Heart left ventricle (tissue), 16 donors: ENCODE measurements at regions of chr9 and their contacts with region 1.

Region 1: GRCh38 chr9:107489687-107490605 is at the start of gene KLF4:
- DNase-seq: peak; percentile 92 to 94 (median 93)
- ATAC-seq: peak; percentile 71 to 91 (median 83)
- H3K4me3 ChIP-seq: peak within 1 kb of the TSS; percentile 64 to 92 (median 81)
- H3K27ac ChIP-seq: peak within 1 kb of the TSS; percentile 90 to 99 (median 95)
- H3K4me1 ChIP-seq: peaks cover 0 to 47% (median 15%) of the 10 kb centered on the region in 12 donors
- H3K27me3 ChIP-seq: peaks cover 0 to 16% (median 0%) of the 10 kb centered on the region in 9 donors
- CTCF ChIP-seq: peak in 1 of 12 donors; percentile 3
- POLR2A ChIP-seq: peak in 1 of 2 donors; percentile 92
- total RNA-seq, gene KLF4: 17.1 to 63.3 (median 21.3) TPM

Region 2: DNA sequence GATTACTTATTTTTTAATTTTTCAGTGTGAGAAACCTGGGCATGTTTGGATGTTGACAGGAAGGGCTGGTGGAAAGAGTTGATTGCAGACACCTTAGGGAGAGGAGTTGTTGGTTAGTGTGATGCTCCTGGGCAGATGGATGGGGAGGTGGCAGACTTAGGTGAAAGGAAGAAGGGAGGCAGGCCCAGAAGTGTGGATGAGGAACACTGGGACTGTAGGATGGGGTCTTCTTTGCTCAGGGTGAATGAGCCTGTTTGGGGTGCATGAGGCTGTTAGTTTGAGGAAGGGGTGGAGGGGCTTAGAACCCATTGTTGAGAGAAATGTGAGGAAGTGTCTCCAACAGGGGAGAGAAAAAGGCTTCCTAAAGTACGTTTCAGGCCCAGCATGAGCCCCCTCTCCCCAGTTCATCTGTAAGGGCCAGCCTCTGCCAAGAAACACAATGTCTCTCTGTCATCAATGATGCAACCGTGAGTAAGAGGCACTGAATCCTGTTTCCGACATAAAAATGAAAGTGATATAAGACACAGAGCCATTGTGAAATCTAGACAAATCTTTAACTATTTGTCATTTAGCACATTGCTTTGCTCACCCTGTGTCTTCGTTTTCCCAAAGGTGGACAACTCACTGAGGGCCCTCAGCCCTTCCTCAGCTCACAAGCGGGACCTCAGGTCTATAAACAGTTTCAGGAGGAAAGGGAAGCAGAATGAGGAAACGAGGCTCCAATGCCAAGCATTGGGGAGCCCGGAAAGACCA is 58.3 kb after region 1 on chr9:
- intact Hi-C with region 1: loop called in 1 of 10 experiments (anchors 5 kb)
- DNase-seq: peak in 3 of 5 donors; percentile 33 to 41 (median 33)
- ATAC-seq: peak; percentile 66 to 95 (median 91)
- H3K4me3 ChIP-seq: peak overlapping the region in 9 of 12 donors; percentile 1 to 40 (median 21)
- H3K27ac ChIP-seq: peak overlapping the region; percentile 42 to 89 (median 68)
- H3K4me1 ChIP-seq: peaks cover 0 to 23% (median 9%) of the 10 kb centered on the region in 12 donors
- H3K27me3 ChIP-seq: no peaks in the 10 kb centered on the region
- CTCF ChIP-seq: no peak
- POLR2A ChIP-seq: no peak

Region 3: GRCh38 chr9:107600060-107600573 is 110.2 kb after region 1 on chr9:
- intact Hi-C with region 1: loop called in 2 of 10 experiments (anchors 5 to 10 kb)
- DNase-seq: peak in 3 of 5 donors; percentile 21 to 57 (median 27)
- ATAC-seq: peak; percentile 83 to 96 (median 88)
- H3K4me3 ChIP-seq: no peak overlapping the region
- H3K27ac ChIP-seq: peak overlapping the region; percentile 35 to 71 (median 65)
- H3K4me1 ChIP-seq: peaks cover 0 to 20% (median 11%) of the 10 kb centered on the region in 12 donors
- H3K27me3 ChIP-seq: no peaks in the 10 kb centered on the region
- CTCF ChIP-seq: no peak
- POLR2A ChIP-seq: no peak

Region 4: GRCh38 chr9:107760454-107761237 is 270.7 kb after region 1 on chr9:
- intact Hi-C with region 1: loop called in 3 of 10 experiments (anchors 10 kb)
- DNase-seq: peak; percentile 53 to 77 (median 66)
- ATAC-seq: peak; percentile 88 to 93 (median 90)
- H3K4me3 ChIP-seq: no peak overlapping the region
- H3K27ac ChIP-seq: peak overlapping the region in 10 of 12 donors; percentile 7 to 85 (median 42)
- H3K4me1 ChIP-seq: peaks cover 0 to 46% (median 6%) of the 10 kb centered on the region in 12 donors
- H3K27me3 ChIP-seq: no peaks in the 10 kb centered on the region
- CTCF ChIP-seq: no peak
- POLR2A ChIP-seq: no peak

Region 5: GRCh38 chr9:108142504-108143201 is 652.7 kb after region 1 on chr9:
- intact Hi-C with region 1: loop called in 6 of 10 experiments (anchors 2 to 10 kb)
- DNase-seq: peak; percentile 76 to 85 (median 80)
- ATAC-seq: peak; percentile 98 to 99 (median 98)
- H3K4me3 ChIP-seq: no peak overlapping the region
- H3K27ac ChIP-seq: peak overlapping the region; percentile 53 to 91 (median 80)
- H3K4me1 ChIP-seq: peaks cover 0 to 25% (median 16%) of the 10 kb centered on the region in 12 donors
- H3K27me3 ChIP-seq: no peaks in the 10 kb centered on the region
- CTCF ChIP-seq: no peak
- POLR2A ChIP-seq: peak in 1 of 2 donors; percentile 5

Region 6: GRCh38 chr9:108761655-108762347 is 1271.9 kb after region 1 on chr9:
- intact Hi-C with region 1: loop called in 2 of 10 experiments (anchors 5 kb)
- DNase-seq: peak in 4 of 5 donors; percentile 33 to 60 (median 50)
- ATAC-seq: peak; percentile 37 to 80 (median 78)
- H3K4me3 ChIP-seq: no peak overlapping the region
- H3K27ac ChIP-seq: no peak overlapping the region
- H3K4me1 ChIP-seq: peaks cover 0 to 9% (median 0%) of the 10 kb centered on the region in 12 donors
- H3K27me3 ChIP-seq: no peaks in the 10 kb centered on the region
- CTCF ChIP-seq: peak; percentile 79 to 94 (median 86)
- POLR2A ChIP-seq: no peak